ENCODE measurements at regions of chr6 and their contacts with region 1.

Region 1: DNA sequence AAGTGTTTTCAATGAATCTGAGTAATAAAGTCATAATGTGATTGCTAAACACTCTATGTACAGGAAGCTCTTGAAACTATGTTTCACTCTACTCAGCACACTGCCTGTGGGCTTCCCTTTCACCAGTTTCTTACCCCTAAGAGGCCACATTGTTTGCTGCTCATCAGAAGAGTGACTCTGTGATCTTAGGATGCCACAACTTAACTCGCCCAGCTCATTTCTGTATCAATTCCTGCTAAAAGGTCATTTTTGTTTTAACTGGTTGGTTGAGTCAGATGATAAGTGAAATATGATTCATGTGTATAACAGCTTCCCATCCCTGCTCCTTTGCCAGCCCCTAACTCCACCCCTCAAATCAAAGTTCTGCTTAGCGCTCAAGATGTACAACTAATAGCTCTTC is 9.8 kb upstream of the NDUFAF4 start:
- DNase-seq: peak; percentile 44
- ATAC-seq: peak; percentile 97
- H3K4me3 ChIP-seq: no peak overlapping the region
- H3K27ac ChIP-seq: no peak overlapping the region
- H3K4me1 ChIP-seq: no peaks in the 10 kb centered on the region
- H3K27me3 ChIP-seq: peaks cover 0 to 1% of the 10 kb centered on the region in 2 experiments; a peak in 1 of 4 replicates
- CTCF ChIP-seq: no peak
- EP300 ChIP-seq: no peak
- POLR2A ChIP-seq: no peak
- RAD21 ChIP-seq: no peak

Region 2: DNA sequence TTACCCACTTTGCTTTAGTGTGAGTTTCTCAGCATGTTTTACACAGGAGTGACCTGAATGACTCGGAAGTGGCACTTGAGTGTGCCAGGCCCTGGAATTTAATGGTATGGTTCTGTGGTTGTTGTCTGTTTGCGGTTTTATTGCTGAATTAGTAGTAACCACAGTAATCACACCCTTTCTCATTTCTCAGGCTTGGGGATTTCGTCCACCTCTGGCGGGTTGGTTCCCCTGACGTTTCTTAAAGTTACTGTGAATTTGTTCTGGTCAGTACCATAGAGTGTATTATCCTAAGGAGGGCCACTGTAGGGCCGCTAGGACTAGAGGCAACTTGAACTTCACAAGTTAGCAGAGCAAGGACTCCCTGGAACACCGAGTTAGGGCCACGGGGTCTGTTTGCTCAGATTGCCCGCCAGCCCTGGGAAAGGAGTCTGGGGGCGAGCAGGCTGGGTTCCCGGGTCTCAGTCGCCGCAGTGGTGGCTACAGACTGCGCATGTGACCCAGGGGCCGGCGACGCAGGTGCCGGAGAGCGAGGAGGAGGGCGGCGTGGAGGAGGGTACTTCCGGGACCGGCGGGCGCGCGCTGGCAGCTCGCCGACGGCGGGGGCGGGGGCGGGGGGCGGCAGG is 16.5 kb after region 1 on chr6:
- CTCF ChIA-PET with region 1: interaction called, 11 read pairs
- POLR2A ChIA-PET with region 1: interaction called, 3 read pairs
- RAD21 ChIA-PET with region 1: interaction called, 4 read pairs
- SMC1A ChIA-PET with region 1: interaction called, 27 read pairs
- in situ Hi-C with region 1: no loop called
- intact Hi-C with region 1: no loop called
- DNase-seq: no peak
- ATAC-seq: peak; percentile 80
- H3K4me3 ChIP-seq: peak overlapping the region; percentile 60
- H3K27ac ChIP-seq: peak overlapping the region; percentile 57
- H3K4me1 ChIP-seq: peaks cover 6% of the 10 kb centered on the region
- H3K27me3 ChIP-seq: no peaks in the 10 kb centered on the region; a peak in 1 of 4 replicates
- CTCF ChIP-seq: no peak
- EP300 ChIP-seq: no peak
- POLR2A ChIP-seq: peak; percentile 83
- RAD21 ChIP-seq: no peak

Region 3: DNA sequence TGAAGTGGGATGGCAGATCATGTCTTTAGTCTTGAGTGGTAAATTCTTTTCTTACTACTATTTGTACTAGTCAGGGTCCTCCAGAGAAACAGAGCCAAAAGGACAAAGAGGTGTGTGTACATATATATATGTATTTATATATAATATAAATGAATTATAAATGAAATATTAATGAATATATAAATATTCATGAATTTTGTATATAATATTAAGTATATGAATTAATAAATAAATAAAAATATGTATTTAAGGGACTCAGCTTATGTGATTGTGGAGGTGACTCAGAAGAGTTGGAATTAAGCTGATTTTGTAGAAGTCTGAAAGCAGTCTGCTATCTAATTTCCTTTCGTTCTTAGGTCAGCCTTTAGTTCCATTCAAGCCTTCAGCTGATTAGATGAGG is 640.9 kb after region 1 on chr6:
- CTCF ChIA-PET with region 1: no interaction called
- POLR2A ChIA-PET with region 1: no interaction called
- RAD21 ChIA-PET with region 1: no interaction called
- SMC1A ChIA-PET with region 1: no interaction called
- in situ Hi-C with region 1: no loop called
- intact Hi-C with region 1: no loop called
- DNase-seq: no peak
- ATAC-seq: no peak
- H3K4me3 ChIP-seq: no peak overlapping the region
- H3K27ac ChIP-seq: no peak overlapping the region
- H3K4me1 ChIP-seq: no peaks in the 10 kb centered on the region
- H3K27me3 ChIP-seq: no peaks in the 10 kb centered on the region
- CTCF ChIP-seq: no peak
- EP300 ChIP-seq: no peak
- POLR2A ChIP-seq: no peak
- RAD21 ChIP-seq: no peak

Measured in GM12878 (cell line).